ENCODE measurements at regions of chr13 and their contacts with region 1.

Region 1: DNA sequence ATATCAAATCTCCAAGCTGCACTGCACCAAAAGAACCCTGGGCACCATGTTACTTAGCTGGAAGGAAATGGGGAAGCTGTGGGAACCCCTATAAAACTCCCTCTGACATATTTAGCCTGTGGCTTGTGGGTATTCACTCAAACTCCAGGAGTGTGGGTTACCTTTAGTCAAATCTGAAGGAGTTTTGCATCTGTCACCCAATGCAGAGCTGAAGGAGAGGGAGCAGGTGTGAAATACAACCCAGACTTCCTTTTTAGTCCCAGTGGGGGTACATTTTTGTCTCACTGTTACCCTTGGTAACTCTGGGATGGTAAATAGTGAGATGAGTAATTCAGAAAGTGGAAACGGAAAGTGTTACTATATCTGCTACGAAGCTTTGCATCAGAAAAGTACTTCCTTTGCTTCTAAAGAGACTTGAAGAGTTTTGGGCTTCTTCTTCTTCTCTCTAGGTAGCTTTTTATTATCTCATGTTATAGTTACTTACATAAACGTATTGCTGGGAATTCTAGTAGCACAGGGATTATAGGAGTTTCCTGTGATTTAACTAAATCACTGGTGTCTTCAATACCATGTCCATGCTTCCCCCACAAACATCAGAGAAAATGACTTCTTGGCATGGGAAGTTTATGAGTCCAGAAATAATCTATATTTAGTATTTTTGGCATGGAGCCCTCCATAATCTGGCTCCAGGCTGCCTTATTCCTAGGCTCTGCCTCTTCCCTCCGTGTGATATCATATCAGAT is 105.9 kb downstream of the AKAP11 start:
- DNase-seq: peak; percentile 95
- ATAC-seq: peak; percentile 83
- H3K4me3 ChIP-seq: peak overlapping the region in 1 of 5 experiments; percentile 35
- H3K4me3 Mint-ChIP-seq: peak overlapping the region; percentile 78
- H3K27ac ChIP-seq: peak overlapping the region; percentile 76 to 79
- H3K27ac Mint-ChIP-seq: peak overlapping the region; percentile 88
- H3K4me1 ChIP-seq: peaks cover 43 to 48% of the 10 kb centered on the region in 2 donors
- H3K4me1 Mint-ChIP-seq: peaks cover 52% of the 10 kb centered on the region
- H3K27me3 ChIP-seq: no peaks in the 10 kb centered on the region
- H3K27me3 Mint-ChIP-seq: no peaks in the 10 kb centered on the region
- CTCF ChIP-seq: no peak

Region 2: DNA sequence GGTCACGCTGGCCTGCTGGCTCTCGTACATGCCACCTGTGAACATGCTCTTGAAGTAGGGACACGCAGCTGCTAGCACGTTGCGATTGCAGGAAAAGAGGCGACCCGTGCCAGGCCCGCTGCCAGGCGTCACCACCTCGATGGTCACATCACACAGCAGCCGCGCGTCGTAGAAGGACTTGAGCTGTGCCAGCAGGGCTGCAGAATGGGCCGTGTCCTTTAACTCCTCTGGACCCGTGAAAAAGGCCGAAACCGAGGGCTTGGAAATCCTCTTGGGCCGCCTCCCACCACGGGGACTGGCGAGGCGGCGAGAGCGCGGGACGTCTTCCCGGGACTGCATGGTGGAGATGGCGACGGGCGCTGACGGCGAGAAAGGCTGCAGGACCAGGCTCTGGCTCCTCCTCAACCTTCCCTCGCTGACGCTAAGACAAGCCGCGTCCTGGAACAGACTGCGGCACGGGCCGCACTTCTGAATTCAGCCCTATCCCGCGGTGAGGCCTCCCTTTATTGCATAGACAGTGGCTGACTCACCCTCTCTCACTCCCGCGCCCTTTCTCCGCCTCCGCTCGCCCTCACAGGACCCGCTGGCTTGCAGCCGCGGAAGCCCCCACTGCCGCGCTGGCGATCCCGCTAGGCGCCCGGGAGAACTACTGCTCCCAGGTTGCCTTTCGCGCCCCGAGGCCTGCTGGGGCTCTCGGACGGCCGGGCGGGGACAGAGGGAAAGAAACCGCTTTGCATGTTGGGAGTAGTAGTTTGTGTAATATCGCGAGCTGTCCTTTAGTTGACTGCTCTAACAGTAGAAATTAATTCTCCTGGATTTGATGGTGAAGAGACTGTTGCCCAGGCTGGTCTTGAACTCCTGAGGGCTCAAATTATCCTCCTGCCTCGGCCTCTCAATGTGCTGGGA is 1183.6 kb before region 1 on chr13 and contains the start of gene KBTBD7:
- CTCF ChIA-PET with region 1: no interaction called
- POLR2A ChIA-PET with region 1: no interaction called
- intact Hi-C with region 1: loop called (anchors 10 kb)
- DNase-seq: peak; percentile 90
- ATAC-seq: peak; percentile 94
- H3K4me3 ChIP-seq: peak within 1 kb of the TSS; percentile 59 to 92 (median 88)
- H3K4me3 Mint-ChIP-seq: peak within 1 kb of the TSS; percentile 96
- H3K27ac ChIP-seq: peak within 1 kb of the TSS; percentile 32 to 63
- H3K27ac Mint-ChIP-seq: peak within 1 kb of the TSS; percentile 94
- H3K4me1 ChIP-seq: peaks cover 33 to 34% of the 10 kb centered on the region in 2 donors
- H3K4me1 Mint-ChIP-seq: peaks cover 45% of the 10 kb centered on the region
- H3K27me3 ChIP-seq: no peaks in the 10 kb centered on the region
- H3K27me3 Mint-ChIP-seq: no peaks in the 10 kb centered on the region
- CTCF ChIP-seq: no peak
- total RNA-seq, gene KBTBD7: 8.4 and 9.2 TPM in 2 replicates

Region 3: DNA sequence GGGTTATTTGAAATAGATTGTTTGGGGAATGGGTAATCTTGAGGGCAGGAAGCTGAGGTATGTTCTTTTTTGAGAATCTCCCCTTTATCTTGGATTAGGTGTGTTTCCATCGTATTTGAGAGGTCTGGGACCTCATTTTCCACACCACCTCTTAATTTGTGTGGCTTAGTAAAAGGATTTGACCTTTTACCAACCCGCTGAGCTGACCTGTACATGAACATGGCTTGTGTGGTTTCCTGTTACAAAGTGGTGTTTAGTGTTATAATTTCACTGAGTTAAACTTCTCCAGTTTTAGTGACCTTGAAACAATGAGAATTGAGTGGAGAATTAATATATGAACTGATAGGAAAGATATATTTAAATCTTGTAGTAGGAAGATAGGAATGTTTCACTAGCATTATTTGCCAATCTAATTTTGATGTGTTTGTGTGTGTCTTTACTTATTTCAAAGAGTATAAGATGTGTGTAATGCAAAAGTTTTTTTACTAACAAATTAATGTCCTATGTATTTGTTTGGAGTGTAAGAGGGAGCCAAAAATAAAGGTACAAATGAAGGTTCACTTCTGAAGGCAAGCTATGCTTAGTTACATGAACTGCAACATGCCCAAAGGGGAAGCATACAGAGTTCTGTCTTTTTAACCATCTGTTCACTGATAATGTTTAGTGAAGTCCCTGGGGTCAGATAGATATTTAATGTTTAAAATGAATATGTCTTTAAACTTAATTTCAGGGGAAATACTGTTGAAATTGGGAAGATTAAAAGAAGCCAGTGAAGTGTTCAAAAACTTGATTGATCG is 1049.6 kb before region 1 on chr13:
- CTCF ChIA-PET with region 1: no interaction called
- POLR2A ChIA-PET with region 1: no interaction called
- intact Hi-C with region 1: no loop called
- DNase-seq: no peak
- ATAC-seq: no peak
- H3K4me3 ChIP-seq: no peak overlapping the region
- H3K4me3 Mint-ChIP-seq: no peak overlapping the region
- H3K27ac ChIP-seq: no peak overlapping the region
- H3K27ac Mint-ChIP-seq: no peak overlapping the region
- H3K4me1 ChIP-seq: no peaks in the 10 kb centered on the region
- H3K4me1 Mint-ChIP-seq: no peaks in the 10 kb centered on the region
- H3K27me3 ChIP-seq: no peaks in the 10 kb centered on the region
- H3K27me3 Mint-ChIP-seq: no peaks in the 10 kb centered on the region
- CTCF ChIP-seq: no peak

Region 4: GRCh38 chr13:42333613-42334328 is 44.0 kb before region 1 on chr13:
- CTCF ChIA-PET with region 1: interaction called, 4 read pairs
- POLR2A ChIA-PET with region 1: no interaction called
- intact Hi-C with region 1: loop called (anchors 2 kb)
- DNase-seq: peak; percentile 55
- ATAC-seq: peak; percentile 57
- H3K4me3 ChIP-seq: no peak overlapping the region
- H3K4me3 Mint-ChIP-seq: no peak overlapping the region
- H3K27ac ChIP-seq: no peak overlapping the region
- H3K27ac Mint-ChIP-seq: no peak overlapping the region
- H3K4me1 ChIP-seq: peaks cover 10 to 16% of the 10 kb centered on the region in 2 donors
- H3K4me1 Mint-ChIP-seq: peaks cover 19% of the 10 kb centered on the region
- H3K27me3 ChIP-seq: no peaks in the 10 kb centered on the region
- H3K27me3 Mint-ChIP-seq: no peaks in the 10 kb centered on the region
- CTCF ChIP-seq: peak; percentile 61

Region 5: GRCh38 chr13:42388326-42388725 is 10.5 kb after region 1 on chr13:
- CTCF ChIA-PET with region 1: no interaction called
- POLR2A ChIA-PET with region 1: no interaction called
- intact Hi-C with region 1: no loop called
- DNase-seq: no peak
- ATAC-seq: no peak
- H3K4me3 ChIP-seq: no peak overlapping the region
- H3K4me3 Mint-ChIP-seq: no peak overlapping the region
- H3K27ac ChIP-seq: no peak overlapping the region
- H3K27ac Mint-ChIP-seq: no peak overlapping the region
- H3K4me1 ChIP-seq: peaks cover 0 to 4% of the 10 kb centered on the region in 2 donors
- H3K4me1 Mint-ChIP-seq: peaks cover 6% of the 10 kb centered on the region
- H3K27me3 ChIP-seq: no peaks in the 10 kb centered on the region
- H3K27me3 Mint-ChIP-seq: no peaks in the 10 kb centered on the region
- CTCF ChIP-seq: no peak

Region 6: DNA sequence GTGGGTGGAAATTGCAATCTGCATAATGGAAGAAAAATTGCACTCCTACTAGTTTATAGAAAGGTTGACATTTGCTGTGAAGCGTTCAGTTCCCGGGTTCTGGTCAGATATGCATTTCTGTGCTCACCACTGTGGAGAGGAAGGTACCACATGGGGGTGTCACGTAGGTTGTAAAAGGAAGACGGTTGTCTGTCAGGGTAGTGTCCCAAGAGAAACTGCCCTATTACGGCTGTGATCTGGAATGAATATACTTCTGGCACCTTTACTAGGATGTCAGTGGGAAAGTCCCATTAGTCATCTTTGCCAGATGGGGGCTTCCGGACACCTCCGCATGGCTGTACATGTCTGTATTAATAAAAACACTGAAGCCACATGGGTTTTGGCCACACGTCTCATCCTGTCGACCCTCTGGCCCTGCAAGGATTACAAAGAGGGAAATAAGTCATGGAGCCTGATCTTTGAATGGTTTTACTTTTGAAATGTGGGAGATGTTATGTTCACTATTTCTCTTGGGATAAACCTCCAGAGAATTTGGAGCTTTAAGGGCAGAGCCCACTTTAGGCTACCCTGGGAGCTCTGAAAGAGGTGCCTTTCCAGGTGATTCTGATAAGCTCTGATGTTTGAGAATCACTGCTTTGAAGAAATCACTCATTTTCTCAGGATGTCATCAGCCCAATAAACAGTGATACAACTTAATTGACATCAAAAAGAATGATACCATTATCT is 28.0 kb after region 1 on chr13:
- CTCF ChIA-PET with region 1: interaction called, 3 read pairs
- POLR2A ChIA-PET with region 1: no interaction called
- intact Hi-C with region 1: loop called (anchors 2 kb)
- DNase-seq: peak; percentile 52
- ATAC-seq: peak; percentile 76
- H3K4me3 ChIP-seq: no peak overlapping the region
- H3K4me3 Mint-ChIP-seq: peak overlapping the region; percentile 72
- H3K27ac ChIP-seq: no peak overlapping the region
- H3K27ac Mint-ChIP-seq: peak overlapping the region; percentile 69
- H3K4me1 ChIP-seq: peaks cover 5 to 12% of the 10 kb centered on the region in 2 donors
- H3K4me1 Mint-ChIP-seq: peaks cover 16% of the 10 kb centered on the region
- H3K27me3 ChIP-seq: no peaks in the 10 kb centered on the region
- H3K27me3 Mint-ChIP-seq: no peaks in the 10 kb centered on the region
- CTCF ChIP-seq: no peak

Region 7: GRCh38 chr13:42532561-42533335 is 154.9 kb after region 1 on chr13:
- CTCF ChIA-PET with region 1: no interaction called
- POLR2A ChIA-PET with region 1: no interaction called
- intact Hi-C with region 1: loop called (anchors 5 kb)
- DNase-seq: peak; percentile 73
- ATAC-seq: peak; percentile 56
- H3K4me3 ChIP-seq: no peak overlapping the region
- H3K4me3 Mint-ChIP-seq: peak overlapping the region; percentile 60
- H3K27ac ChIP-seq: peak overlapping the region in 1 of 2 donors; percentile 18
- H3K27ac Mint-ChIP-seq: no peak overlapping the region
- H3K4me1 ChIP-seq: peaks cover 27 to 31% of the 10 kb centered on the region in 2 donors
- H3K4me1 Mint-ChIP-seq: peaks cover 37% of the 10 kb centered on the region
- H3K27me3 ChIP-seq: no peaks in the 10 kb centered on the region
- H3K27me3 Mint-ChIP-seq: no peaks in the 10 kb centered on the region
- CTCF ChIP-seq: no peak